BJ (cell line): ENCODE measurements at regions of chr1 and their contacts with region 1.

Region 1: GRCh38 chr1:32215629-32216480 is 6.3 kb downstream of the TMEM234 start:
- DNase-seq: no peak
- H3K4me3 ChIP-seq: no peak overlapping the region
- H3K27me3 ChIP-seq: no peaks in the 10 kb centered on the region
- CTCF ChIP-seq: peak; percentile 90

Region 2: DNA sequence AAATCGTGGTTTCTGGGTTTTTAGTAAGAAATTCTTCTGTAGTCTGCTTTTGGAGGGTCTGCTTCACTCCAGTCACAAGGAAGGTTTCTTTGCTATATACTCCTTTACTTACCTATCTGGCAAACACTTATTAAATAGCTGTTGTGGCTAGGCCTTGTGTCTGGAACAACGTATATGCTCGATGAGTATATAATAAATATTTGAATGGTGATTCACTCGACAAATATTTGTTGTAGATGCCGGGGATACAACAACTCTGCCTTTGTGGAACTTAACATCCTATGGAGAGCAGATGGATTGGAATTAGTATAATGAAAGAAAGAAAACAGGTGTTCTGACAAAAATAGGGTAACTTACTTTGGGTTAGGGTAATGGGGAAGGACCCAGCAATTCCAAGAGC is 76.9 kb before region 1 on chr1:
- CTCF ChIA-PET with region 1: no interaction called
- POLR2A ChIA-PET with region 1: no interaction called
- DNase-seq: no peak
- H3K4me3 ChIP-seq: no peak overlapping the region
- H3K27me3 ChIP-seq: no peaks in the 10 kb centered on the region
- CTCF ChIP-seq: no peak

Region 3: DNA sequence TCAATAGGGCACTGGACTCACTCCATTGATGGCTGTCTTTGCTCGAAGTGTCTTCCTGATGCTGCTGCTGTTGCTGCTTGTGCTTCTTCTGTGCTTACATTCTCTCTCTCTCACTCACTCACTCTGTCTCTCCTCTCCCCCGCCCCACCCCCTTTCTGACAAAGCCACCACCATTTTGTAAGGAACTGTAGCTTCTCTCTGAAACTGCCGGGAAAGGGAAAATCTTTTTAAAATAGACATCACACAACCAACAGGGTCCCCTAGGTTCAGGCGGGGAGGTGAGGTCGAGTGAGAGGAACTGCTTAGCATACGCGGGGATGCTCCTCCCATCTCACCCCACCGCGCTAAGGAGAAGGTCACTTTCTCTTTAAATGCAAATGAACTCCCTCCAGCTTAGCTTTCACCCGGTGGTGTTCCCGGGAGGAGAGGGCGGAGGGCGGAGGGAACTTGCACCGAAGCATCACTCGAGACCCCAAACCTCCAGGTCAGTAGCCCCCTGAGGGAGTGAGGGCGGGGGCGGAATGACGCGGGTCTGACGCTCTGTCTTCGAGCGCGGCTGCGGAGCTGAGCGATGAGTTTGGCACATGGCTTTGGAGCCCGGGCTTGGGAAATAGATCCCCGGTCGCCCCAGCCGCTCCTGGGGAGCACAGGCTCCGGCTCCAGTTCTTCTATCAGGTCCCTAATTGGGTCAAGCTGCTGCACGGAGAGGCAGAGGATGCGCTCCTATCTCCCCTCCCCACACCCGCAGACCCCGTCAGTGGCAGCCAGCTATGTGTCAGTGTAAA is 15.4 kb before region 1 on chr1 and contains the start of gene CCDC28B:
- CTCF ChIA-PET with region 1: interaction called, 18 read pairs
- POLR2A ChIA-PET with region 1: interaction called, 5 read pairs
- DNase-seq: no peak
- H3K4me3 ChIP-seq: peak within 1 kb of the TSS; percentile 65
- H3K27me3 ChIP-seq: no peaks in the 10 kb centered on the region
- CTCF ChIP-seq: no peak
- polyA plus RNA-seq, gene CCDC28B: 11.5 and 13.9 TPM in 2 replicates

Region 4: DNA sequence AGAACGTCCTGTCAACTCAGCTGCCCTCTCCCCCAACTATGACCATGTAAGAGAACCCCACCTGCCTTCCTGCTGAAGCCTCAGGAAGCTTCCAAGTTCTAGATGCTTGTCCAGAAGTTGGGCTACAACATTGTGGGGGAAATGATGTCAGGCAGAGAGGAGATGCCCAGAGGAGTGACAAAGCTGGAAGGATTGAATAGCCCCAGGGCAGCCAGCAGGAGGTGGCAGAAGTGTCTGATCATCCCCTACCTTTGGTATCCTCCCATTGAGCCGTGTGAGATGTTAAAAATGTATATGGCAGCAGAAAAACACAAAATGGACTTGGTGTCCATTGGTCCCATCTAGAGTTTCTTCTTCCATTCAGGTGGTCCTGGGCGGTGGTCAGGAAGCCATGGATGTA is 12.9 kb after region 1 on chr1:
- CTCF ChIA-PET with region 1: interaction called, 11 read pairs
- POLR2A ChIA-PET with region 1: no interaction called
- DNase-seq: no peak
- H3K4me3 ChIP-seq: no peak overlapping the region
- H3K27me3 ChIP-seq: no peaks in the 10 kb centered on the region
- CTCF ChIP-seq: no peak

Region 5: GRCh38 chr1:32247983-32248889 is 32.4 kb after region 1 on chr1:
- CTCF ChIA-PET with region 1: interaction called, 35 read pairs
- POLR2A ChIA-PET with region 1: interaction called, 6 read pairs
- DNase-seq: no peak
- H3K4me3 ChIP-seq: no peak overlapping the region
- H3K27me3 ChIP-seq: no peaks in the 10 kb centered on the region
- CTCF ChIP-seq: peak; percentile 90

Region 6: GRCh38 chr1:32335790-32336590 is 120.1 kb after region 1 on chr1 and contains the start of gene MARCKSL1:
- CTCF ChIA-PET with region 1: interaction called, 5 read pairs
- POLR2A ChIA-PET with region 1: interaction called, 17 read pairs
- DNase-seq: no peak
- H3K4me3 ChIP-seq: peak within 1 kb of the TSS; percentile 61
- H3K27me3 ChIP-seq: no peaks in the 10 kb centered on the region
- CTCF ChIP-seq: no peak
- polyA plus RNA-seq, gene MARCKSL1: 41.3 and 52.0 TPM in 2 replicates

Region 7: DNA sequence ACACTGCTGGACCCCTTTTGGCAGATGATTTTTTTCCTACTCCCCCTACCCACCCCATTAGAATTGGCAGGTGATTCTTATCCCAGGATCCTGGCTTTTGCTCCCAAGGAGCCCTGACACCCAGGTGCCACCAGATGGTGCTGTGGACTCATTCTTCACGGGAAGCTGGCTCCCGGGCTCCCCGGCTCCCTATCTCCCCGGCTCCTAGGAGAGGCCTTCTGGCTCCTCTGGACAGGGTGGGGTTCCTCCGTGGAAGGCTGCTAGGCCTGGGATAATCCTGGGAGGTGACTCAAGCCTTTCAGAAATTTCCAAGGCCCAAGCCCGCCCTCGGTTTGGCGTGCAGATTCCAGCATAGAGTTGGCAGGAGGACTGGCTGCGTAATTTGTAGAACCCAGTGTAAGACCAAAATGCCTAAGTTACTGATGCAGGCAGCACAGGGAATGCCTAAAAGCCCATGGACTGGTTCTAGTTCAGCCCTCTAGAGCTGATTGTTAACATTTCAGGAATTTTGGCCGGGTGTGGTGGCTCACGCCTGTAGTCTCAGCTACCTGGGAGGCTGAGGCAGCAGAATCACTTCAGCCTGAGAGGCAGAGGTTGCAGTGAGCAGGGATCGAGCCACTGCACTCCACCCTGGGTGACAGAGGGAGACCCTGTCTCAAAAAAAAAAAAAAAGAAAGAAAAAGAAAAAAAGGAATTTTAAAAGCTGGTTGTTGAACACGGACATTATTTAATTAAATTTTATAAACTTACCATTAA is 185.2 kb after region 1 on chr1:
- CTCF ChIA-PET with region 1: interaction called, 14 read pairs
- POLR2A ChIA-PET with region 1: no interaction called
- DNase-seq: peak; percentile 83
- H3K4me3 ChIP-seq: no peak overlapping the region
- H3K27me3 ChIP-seq: no peaks in the 10 kb centered on the region
- CTCF ChIP-seq: peak; percentile 93